ENCODE measurements at regions of chr3 and their contacts with region 1.

Region 1: DNA sequence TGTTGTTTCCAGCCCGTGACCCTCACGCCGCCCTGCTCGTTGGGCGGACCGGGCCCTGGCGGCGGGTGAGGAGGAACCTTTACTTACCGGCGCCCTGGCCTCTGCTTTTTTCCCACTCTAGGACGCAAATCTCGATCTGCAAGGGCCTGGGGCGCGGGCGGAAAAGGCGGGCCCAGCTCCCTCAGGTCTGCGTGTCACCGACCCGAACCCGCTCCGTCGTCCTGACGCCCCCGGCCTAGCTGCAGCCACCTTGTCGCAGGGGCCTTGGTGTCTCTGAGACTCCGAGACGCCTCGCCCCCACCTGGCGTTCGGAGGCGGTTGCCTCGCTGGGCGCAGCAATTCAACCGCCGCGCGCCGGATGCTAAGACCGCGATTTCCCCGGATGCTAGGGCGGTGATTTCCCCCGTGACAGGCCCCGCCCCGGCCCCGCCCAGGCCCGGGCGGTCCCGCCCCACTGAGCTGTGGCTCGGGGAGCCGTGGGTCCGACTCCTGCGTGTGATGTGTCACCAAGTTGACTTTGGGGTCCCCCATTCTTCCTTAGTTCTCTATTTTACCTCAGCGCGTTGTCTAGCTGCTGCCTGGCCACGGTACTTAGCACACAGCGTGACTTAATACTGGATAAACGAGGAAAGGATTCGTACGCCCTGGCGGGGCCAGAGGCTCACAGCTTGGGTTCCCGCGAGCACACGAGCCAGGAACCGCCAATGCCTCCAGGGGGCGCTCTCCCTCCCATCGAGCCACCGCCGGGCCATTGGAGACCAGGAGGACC is at the start of gene RPL39L:
- DNase-seq: peak; percentile 83 to 92
- H3K4me3 ChIP-seq: peak within 1 kb of the TSS; percentile 73
- H3K27ac ChIP-seq: peak within 1 kb of the TSS; percentile 57
- H3K4me1 ChIP-seq: peaks cover 22% of the 10 kb centered on the region
- H3K27me3 ChIP-seq: no peaks in the 10 kb centered on the region
- CTCF ChIP-seq: peak; percentile 99
- total RNA-seq, gene RPL39L: 73.9 and 81.3 TPM in 2 replicates

Region 2: DNA sequence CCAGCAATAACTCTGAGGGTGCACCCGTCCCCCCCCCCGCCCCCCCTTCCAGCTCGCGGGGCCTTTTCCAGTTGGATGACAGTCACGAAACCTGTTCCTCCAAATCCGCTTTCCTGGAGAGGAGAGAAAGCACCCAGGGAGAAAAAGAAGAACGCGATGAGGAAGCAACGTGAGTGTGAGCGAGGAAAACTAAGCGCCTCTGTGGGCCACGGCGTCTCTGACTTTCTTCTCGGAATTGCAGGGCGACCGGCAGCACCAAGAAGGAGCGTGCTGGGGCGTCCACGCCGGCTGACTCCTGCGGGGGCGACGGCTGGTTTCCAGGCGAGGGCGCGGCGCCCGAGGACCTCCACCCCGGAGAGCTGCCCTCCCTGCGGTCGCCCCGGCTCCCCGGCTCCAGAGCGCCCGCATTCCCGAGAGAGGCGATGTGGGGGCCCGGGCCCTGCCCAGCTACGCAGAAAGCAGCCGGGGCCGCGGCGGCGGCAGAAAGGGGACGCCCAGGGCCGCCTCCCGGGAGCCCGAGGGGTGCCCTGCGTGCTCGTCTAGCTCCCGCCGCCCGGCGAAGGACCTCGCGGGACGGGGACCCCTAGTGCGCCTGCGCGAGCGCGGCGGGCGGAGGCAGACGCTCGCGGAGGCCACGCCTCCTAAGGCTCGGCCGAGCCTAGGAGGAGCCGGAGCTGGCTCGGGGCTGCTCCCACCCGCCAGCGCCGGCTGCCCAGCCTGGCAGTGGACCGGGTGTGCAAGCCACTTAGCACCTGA is 312.2 kb before region 1 on chr3:
- CTCF ChIA-PET with region 1: interaction called, 9 read pairs
- POLR2A ChIA-PET with region 1: no interaction called
- intact Hi-C with region 1: loop called (anchors 2 kb)
- DNase-seq: peak; percentile 82 to 92
- H3K4me3 ChIP-seq: peak overlapping the region; percentile 93
- H3K27ac ChIP-seq: no peak overlapping the region
- H3K4me1 ChIP-seq: peaks cover 9% of the 10 kb centered on the region
- H3K27me3 ChIP-seq: peaks cover 42% of the 10 kb centered on the region
- CTCF ChIP-seq: no peak

Region 3: DNA sequence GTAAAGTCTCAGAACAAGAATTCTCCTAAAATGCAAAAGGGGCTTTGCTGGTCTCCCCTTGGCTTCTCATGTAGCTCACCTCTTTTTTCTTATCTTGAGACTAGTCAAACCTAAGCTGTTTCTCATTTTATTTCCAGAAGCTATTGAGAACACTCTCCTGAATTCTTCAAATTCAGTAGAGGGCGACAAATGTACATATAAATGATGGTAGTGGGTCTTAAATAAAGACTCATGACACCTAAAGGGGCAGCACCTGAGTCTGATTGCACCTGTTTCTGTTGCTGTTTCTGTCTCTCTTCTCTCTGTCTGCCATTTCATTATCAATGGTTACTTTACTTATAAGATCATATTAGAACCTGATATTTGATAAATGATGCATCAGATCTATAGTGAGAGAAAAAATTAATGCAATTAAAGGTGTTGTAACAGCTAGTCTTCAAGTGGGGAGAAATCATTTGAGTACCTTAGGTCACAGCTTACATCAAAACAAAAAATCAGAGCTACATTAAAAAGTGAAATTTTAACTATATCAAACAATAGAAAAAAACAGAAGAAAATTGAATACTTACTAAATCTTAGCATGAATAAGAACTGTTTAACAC is 289.8 kb before region 1 on chr3:
- CTCF ChIA-PET with region 1: interaction called, 11 read pairs
- POLR2A ChIA-PET with region 1: no interaction called
- intact Hi-C with region 1: no loop called
- DNase-seq: peak in 1 of 2 experiments; percentile 52
- H3K4me3 ChIP-seq: no peak overlapping the region
- H3K27ac ChIP-seq: no peak overlapping the region
- H3K4me1 ChIP-seq: no peaks in the 10 kb centered on the region
- H3K27me3 ChIP-seq: 0 out of 2 replicates have a peak, but pooled peaks cover 7% of the 10 kb centered on the region
- CTCF ChIP-seq: peak; percentile 81

Region 4: DNA sequence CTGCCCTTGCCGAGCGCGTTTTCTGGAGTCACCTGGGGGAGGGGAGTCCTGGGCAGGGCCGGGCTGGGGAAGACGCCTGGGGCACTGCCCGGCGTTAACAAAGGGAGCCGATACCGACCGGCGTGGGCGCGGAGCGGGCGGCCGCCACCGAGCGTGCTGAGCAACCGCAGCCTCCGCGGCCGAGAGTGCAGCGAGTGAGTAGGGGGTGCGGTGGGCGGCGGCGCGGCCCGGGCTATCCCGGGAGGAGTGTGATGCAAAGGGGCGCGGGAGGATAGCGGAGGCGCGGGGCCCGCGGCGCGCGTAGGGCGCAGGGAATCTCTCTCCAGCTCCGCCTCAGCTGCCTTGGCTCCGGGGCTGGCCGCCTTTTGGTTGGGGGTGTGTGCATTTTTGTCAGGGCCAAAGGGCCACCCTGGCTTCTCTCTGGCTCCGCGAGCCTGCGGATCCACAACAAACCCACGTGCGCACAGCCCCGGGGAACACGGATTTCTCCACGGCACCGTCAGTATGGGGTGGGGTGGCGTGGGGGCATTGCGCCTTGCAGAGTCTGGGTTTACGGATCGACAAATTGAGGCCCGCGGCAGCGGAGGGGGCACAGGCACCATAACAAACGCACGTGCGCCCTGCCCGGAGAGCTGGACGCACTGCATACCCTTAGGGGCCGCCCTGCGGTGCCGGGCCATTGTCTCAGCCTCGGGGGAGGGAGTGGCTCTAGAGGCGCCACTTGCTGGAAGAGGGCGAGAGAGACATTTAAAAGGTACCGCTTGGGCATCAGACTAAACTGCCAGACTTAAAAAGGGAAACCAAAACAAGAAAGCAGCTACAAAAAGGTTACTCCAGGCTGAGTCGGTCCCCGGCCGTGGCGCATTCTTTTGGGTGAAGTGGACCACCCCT is 208.4 kb before region 1 on chr3:
- CTCF ChIA-PET with region 1: interaction called, 4 read pairs
- POLR2A ChIA-PET with region 1: interaction called, 3 read pairs
- intact Hi-C with region 1: loop called (anchors 1 kb)
- DNase-seq: peak; percentile 65 to 71
- H3K4me3 ChIP-seq: peak overlapping the region; percentile 97
- H3K27ac ChIP-seq: no peak overlapping the region
- H3K4me1 ChIP-seq: peaks cover 12% of the 10 kb centered on the region
- H3K27me3 ChIP-seq: no peaks in the 10 kb centered on the region
- CTCF ChIP-seq: peak; percentile 29; the same call in 1 of the 2 replicates

Region 5: GRCh38 chr3:186971578-186971977 is 167.7 kb before region 1 on chr3:
- CTCF ChIA-PET with region 1: no interaction called
- POLR2A ChIA-PET with region 1: no interaction called
- intact Hi-C with region 1: no loop called
- DNase-seq: no peak
- H3K4me3 ChIP-seq: no peak overlapping the region
- H3K27ac ChIP-seq: no peak overlapping the region
- H3K4me1 ChIP-seq: no peaks in the 10 kb centered on the region
- H3K27me3 ChIP-seq: no peaks in the 10 kb centered on the region
- CTCF ChIP-seq: no peak

Region 6: GRCh38 chr3:186988806-186989205 is 150.5 kb before region 1 on chr3:
- CTCF ChIA-PET with region 1: no interaction called
- POLR2A ChIA-PET with region 1: no interaction called
- intact Hi-C with region 1: no loop called
- DNase-seq: no peak
- H3K4me3 ChIP-seq: no peak overlapping the region
- H3K27ac ChIP-seq: no peak overlapping the region
- H3K4me1 ChIP-seq: peaks cover 36% of the 10 kb centered on the region
- H3K27me3 ChIP-seq: no peaks in the 10 kb centered on the region
- CTCF ChIP-seq: no peak

Region 7: DNA sequence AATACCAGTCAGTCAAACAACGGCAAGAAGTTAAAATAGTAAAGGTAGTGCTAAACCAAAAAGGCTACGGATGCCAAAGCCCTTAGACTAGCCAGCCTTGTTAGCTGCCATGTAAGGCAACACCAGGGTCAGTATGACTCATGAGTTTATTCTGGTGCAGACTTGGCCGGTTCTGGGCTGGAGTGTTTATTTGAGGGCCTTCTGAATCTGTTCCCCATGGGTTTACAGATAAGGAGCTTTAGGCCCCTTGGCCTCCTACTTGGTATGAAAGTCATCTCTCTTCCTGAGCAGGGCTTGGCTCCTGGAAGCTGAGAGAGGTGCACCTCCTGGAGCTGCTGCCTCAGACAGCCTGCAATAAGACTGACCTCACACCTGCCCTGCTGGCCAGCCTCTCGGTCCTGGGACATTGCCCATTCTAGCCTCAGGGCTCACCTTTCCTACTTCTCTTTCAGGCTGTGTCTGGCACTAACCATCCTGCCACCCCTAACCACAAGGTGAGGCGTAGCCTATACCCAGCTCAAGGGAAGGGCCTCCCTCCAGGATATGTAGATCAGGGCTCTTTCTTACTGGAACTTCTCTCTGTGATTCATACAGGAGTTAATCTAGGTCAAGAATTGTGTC is 47.6 kb after region 1 on chr3:
- CTCF ChIA-PET with region 1: interaction called, 14 read pairs
- POLR2A ChIA-PET with region 1: interaction called, 7 read pairs
- intact Hi-C with region 1: loop called (anchors 1 kb)
- DNase-seq: peak; percentile 98 to 100
- H3K4me3 ChIP-seq: peak overlapping the region; percentile 16; the same call in 1 of the 2 replicates
- H3K27ac ChIP-seq: peak overlapping the region; percentile 83
- H3K4me1 ChIP-seq: peaks cover 60% of the 10 kb centered on the region
- H3K27me3 ChIP-seq: no peaks in the 10 kb centered on the region
- CTCF ChIP-seq: 0 out of 2 replicates have a peak, but pooled peaks have one; percentile 11

Region 8: GRCh38 chr3:187319699-187320302 is 180.5 kb after region 1 on chr3:
- CTCF ChIA-PET with region 1: interaction called, 14 read pairs
- POLR2A ChIA-PET with region 1: no interaction called
- intact Hi-C with region 1: loop called (anchors 5 kb)
- DNase-seq: peak; percentile 64 to 72
- H3K4me3 ChIP-seq: no peak overlapping the region
- H3K27ac ChIP-seq: no peak overlapping the region
- H3K4me1 ChIP-seq: no peaks in the 10 kb centered on the region
- H3K27me3 ChIP-seq: peaks cover 41% of the 10 kb centered on the region
- CTCF ChIP-seq: peak; percentile 85

Region 9: DNA sequence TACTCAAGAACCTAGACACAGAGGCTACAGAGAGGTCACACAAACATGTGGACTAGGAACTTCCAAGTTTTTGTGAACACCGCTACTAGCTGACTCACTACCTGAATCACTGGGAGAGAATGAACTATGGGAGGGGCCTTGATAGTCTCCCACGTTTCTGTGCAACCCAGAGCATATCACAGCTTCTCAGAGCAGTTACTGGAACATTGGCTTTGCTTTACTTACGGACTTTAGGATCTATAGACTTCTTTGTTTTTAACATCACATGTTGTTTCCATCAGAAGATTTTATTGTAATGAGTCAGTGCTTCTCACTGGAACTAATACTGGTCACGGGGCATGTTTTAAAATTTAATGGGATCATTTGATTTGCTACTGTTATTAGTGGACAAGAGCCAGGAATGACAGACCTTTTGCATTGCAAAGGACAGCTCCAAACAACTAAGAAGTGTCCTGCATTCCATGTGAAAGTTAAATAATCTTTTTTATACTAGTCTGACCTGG is 264.5 kb after region 1 on chr3:
- CTCF ChIA-PET with region 1: no interaction called
- POLR2A ChIA-PET with region 1: interaction called, 14 read pairs
- intact Hi-C with region 1: no loop called
- DNase-seq: peak; percentile 68 to 82
- H3K4me3 ChIP-seq: no peak overlapping the region
- H3K27ac ChIP-seq: peak overlapping the region; percentile 36; the same call in 1 of the 2 replicates
- H3K4me1 ChIP-seq: peaks cover 15% of the 10 kb centered on the region
- H3K27me3 ChIP-seq: no peaks in the 10 kb centered on the region
- CTCF ChIP-seq: no peak

Measured in PC-9 (cell line).